Activated CD4-positive, alpha-beta T cell treated with anti-CD3 and anti-CD28 coated beads for 36 hours (primary cell): ENCODE measurements at regions of chr13 and their contacts with region 1.

Region 1: DNA sequence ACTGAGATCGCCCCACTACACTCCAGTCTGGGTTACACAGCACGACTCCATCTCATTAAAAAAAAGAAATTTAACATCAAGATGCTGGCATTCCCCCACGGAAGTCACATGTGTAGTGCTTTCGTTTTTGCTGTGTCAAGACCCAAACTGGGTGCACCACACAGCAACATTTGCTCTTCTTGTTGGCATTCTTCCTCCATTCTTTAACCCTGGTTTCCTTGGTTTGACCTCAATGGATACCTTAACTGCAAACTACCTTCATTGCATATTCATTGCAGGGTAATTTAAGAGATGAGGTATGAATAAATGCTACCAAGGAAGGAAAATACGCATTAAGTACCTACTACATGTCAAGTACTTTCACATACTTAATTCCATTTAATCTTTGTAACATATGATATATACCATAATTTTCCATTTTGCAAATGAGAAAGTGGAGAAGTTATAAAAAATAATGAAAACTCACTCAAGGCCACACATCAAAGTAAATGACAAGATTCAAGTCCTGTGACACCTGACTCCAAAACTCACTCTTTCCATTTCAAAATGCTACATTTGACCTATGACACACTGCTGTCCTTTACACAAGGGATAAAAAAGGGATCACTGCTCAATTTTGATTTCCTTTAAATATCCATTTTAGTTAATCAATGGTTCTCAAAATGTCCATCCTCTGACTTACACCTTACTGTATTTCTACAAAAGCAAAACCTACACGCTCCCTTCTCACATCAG is 59.2 kb downstream of the STK24 start:
- DNase-seq: peak; percentile 69
- ATAC-seq: peak; percentile 54
- H3K4me3 Mint-ChIP-seq: peak overlapping the region; percentile 43
- H3K27ac Mint-ChIP-seq: peak overlapping the region; percentile 93
- H3K4me1 Mint-ChIP-seq: peaks cover 98% of the 10 kb centered on the region
- H3K27me3 Mint-ChIP-seq: no peaks in the 10 kb centered on the region

Region 2: DNA sequence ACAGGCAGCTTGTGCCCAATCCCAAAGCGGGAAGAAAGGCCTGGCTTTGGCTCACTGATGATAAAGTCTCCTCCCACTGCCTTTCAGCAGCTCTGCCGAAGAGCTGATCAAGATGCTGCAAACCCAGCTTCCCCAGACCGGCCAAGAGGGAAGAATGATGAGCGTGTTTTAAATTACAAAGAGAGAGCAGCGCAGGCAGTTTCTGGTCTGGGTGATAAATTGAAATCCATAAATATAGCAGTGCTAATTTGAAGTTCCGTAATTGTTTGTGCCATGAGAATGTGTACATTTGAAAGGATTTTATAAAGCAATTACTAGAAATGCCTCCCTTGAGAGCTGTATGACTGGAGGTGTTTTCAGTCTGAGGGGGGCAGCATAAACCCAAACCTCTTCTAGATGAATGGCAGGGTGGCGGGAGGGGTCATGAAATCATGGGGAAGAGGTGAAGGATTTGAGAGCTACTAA is 112.6 kb before region 1 on chr13:
- CTCF ChIA-PET with region 1: no interaction called
- POLR2A ChIA-PET with region 1: no interaction called
- intact Hi-C with region 1: no loop called
- DNase-seq: no peak
- ATAC-seq: no peak
- H3K4me3 Mint-ChIP-seq: no peak overlapping the region
- H3K27ac Mint-ChIP-seq: no peak overlapping the region
- H3K4me1 Mint-ChIP-seq: no peaks in the 10 kb centered on the region
- H3K27me3 Mint-ChIP-seq: peaks cover 3% of the 10 kb centered on the region

Region 3: DNA sequence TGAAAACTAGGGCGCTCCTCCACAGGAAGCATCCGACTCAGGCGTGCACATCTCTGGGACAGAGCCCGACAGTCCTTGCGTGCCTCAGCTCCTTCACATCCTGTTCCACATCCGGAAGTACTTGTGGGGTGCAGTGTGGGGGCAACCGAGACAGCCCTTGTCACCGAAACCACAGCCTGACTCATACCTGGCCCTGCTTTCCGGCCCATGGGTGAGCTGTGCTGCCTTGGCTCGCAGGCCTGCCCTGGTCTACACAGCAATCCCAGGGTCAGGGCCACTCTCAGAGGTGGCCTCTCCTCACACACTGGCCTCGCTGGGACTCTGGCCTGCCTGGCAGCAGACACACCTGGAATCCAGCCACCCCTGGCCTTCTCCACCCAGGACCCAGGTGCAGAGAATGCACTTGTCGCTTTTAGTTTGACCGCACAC is 41.2 kb before region 1 on chr13:
- CTCF ChIA-PET with region 1: interaction called, 5 read pairs
- POLR2A ChIA-PET with region 1: no interaction called
- intact Hi-C with region 1: loop called (anchors 1 to 2 kb)
- DNase-seq: peak; percentile 94
- ATAC-seq: peak; percentile 86
- H3K4me3 Mint-ChIP-seq: peak overlapping the region; percentile 63
- H3K27ac Mint-ChIP-seq: peak overlapping the region; percentile 93
- H3K4me1 Mint-ChIP-seq: peaks cover 56% of the 10 kb centered on the region
- H3K27me3 Mint-ChIP-seq: no peaks in the 10 kb centered on the region

Region 4: GRCh38 chr13:98484289-98485219 is 33.2 kb before region 1 on chr13:
- CTCF ChIA-PET with region 1: interaction called, 4 read pairs
- POLR2A ChIA-PET with region 1: interaction called, 4 read pairs
- intact Hi-C with region 1: loop called in 1 of 2 experiments (anchors 2 kb)
- DNase-seq: peak; percentile 85
- ATAC-seq: peak; percentile 74
- H3K4me3 Mint-ChIP-seq: no peak overlapping the region
- H3K27ac Mint-ChIP-seq: peak overlapping the region; percentile 78
- H3K4me1 Mint-ChIP-seq: peaks cover 91% of the 10 kb centered on the region
- H3K27me3 Mint-ChIP-seq: no peaks in the 10 kb centered on the region

Region 5: DNA sequence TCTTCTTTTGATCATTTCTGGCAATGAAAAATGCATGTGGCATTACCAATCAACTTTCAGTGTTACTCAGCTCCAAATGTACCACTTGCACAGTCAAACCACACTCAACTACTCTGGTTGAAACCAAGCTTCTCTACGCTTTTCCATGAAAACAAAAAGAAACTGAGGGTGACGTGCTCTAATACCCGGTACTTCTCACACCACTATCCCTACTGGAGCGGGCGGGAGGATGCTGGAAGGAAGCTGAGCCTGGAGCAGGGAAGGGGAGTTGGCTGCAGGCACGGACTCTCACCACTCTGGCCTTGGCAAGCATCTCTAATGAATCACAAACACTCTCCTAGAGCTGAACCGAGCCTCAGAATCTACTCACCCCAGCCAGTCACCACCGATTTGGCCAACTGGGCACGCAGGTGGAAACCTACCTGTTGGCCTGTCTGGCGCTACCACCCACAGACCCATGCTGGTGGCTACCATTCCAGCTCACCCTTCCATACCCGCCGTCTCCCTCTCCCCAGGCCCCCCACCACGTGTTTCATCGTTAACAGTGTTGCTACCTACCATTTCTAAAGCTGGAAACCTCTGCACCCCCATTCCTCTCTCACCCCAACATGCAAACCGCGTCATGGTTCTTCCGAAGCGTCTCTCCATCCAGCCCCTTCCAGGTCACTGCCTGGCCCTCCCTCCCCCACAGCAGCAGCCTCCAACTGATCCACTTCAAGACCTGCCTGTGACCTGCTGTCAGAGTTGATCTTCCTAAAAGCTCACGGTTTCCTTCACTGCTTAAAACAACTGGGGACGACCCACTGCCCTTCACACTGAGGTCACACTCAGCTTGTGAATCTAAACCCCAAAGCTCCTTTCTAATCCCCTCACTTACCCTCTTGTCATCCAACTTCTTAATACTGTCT is 11.2 kb after region 1 on chr13:
- CTCF ChIA-PET with region 1: interaction called, 10 read pairs
- POLR2A ChIA-PET with region 1: interaction called, 10 read pairs
- intact Hi-C with region 1: loop called (anchors 1 kb)
- DNase-seq: peak; percentile 55
- ATAC-seq: peak; percentile 80
- H3K4me3 Mint-ChIP-seq: peak overlapping the region; percentile 29
- H3K27ac Mint-ChIP-seq: peak overlapping the region; percentile 87
- H3K4me1 Mint-ChIP-seq: peaks cover 93% of the 10 kb centered on the region
- H3K27me3 Mint-ChIP-seq: no peaks in the 10 kb centered on the region

Region 6: GRCh38 chr13:98598043-98598442 is 80.3 kb after region 1 on chr13:
- CTCF ChIA-PET with region 1: interaction called, 3 read pairs
- POLR2A ChIA-PET with region 1: interaction called, 11 read pairs
- intact Hi-C with region 1: no loop called
- DNase-seq: no peak
- ATAC-seq: no peak
- H3K4me3 Mint-ChIP-seq: no peak overlapping the region
- H3K27ac Mint-ChIP-seq: peak overlapping the region; percentile 20
- H3K4me1 Mint-ChIP-seq: peaks cover 16% of the 10 kb centered on the region
- H3K27me3 Mint-ChIP-seq: no peaks in the 10 kb centered on the region